ENCODE measurements at regions of chr10 and their contacts with region 1.

Region 1: GRCh38 chr10:58781873-58782488 is 269.3 kb downstream of the BICC1 start:
- DNase-seq: peak; percentile 62
- H3K4me3 Mint-ChIP-seq: no peak overlapping the region
- H3K27ac Mint-ChIP-seq: no peak overlapping the region
- H3K4me1 Mint-ChIP-seq: no peaks in the 10 kb centered on the region
- H3K27me3 Mint-ChIP-seq: no peaks in the 10 kb centered on the region

Region 2: GRCh38 chr10:58531084-58531695 is 250.8 kb before region 1 on chr10:
- intact Hi-C with region 1: loop called (anchors 10 kb)
- DNase-seq: peak; percentile 86
- H3K4me3 Mint-ChIP-seq: no peak overlapping the region
- H3K27ac Mint-ChIP-seq: no peak overlapping the region
- H3K4me1 Mint-ChIP-seq: no peaks in the 10 kb centered on the region
- H3K27me3 Mint-ChIP-seq: no peaks in the 10 kb centered on the region

Region 3: GRCh38 chr10:58807629-58808022 is 25.6 kb after region 1 on chr10:
- intact Hi-C with region 1: no loop called
- DNase-seq: no peak
- H3K4me3 Mint-ChIP-seq: no peak overlapping the region
- H3K27ac Mint-ChIP-seq: no peak overlapping the region
- H3K4me1 Mint-ChIP-seq: no peaks in the 10 kb centered on the region
- H3K27me3 Mint-ChIP-seq: no peaks in the 10 kb centered on the region

Region 4: GRCh38 chr10:58993480-58994221 is 211.7 kb after region 1 on chr10:
- intact Hi-C with region 1: no loop called
- DNase-seq: no peak
- H3K4me3 Mint-ChIP-seq: no peak overlapping the region
- H3K27ac Mint-ChIP-seq: no peak overlapping the region
- H3K4me1 Mint-ChIP-seq: no peaks in the 10 kb centered on the region
- H3K27me3 Mint-ChIP-seq: no peaks in the 10 kb centered on the region

Measured in activated CD4-positive, alpha-beta T cell treated with anti-CD3 and anti-CD28 coated beads, Interleukin-2, amount 10 ng/mL, durations not matched to agents 24 days and 14 days (primary cell).